ENCODE measurements at regions of chr10 and their contacts with region 1.

Region 1: DNA sequence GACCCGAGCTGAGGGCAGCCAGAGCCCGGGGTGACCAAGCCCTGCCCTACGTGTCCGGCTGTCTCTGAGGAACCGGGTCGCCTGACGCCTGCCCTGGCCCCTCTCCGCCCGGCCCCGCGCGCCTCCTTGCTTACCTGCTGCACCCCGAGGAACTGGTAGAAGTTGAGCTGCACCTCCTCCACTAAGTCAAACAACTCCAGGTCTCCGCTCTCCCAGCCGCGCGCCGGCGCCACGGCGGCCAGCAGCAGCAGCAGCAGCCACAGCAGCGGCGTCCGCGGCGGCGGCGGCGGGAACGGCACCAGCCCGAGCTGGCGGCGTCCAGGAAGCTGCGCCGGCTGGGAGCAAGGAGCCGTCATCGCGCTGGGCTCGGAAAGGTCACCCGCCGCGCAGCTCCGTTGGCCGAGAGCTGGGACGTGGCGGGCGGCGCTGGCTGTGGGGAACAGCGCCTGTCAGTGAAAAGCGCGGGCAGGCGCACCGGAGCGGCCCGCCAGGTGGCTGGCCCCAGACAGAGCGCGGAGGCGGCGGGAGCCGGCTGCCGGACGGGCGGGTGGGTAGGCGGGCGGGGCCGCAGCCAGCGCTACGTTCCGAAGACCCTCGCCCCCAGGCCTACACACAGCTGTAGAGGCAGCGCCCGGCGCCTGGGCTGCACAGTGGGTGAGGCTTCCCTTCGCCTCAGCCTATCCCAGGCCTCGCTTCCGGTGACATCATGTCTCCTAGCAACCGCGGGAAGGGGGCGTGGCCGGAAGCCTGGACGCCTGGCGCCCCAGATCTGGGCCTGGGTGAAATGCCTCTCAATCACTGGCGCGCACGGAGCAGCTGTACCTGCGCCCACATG is at the start of gene DNAJC1:
- DNase-seq: peak; percentile 99
- H3K4me3 ChIP-seq: peak within 1 kb of the TSS; percentile 65 to 91 (median 80)
- H3K27ac ChIP-seq: peak within 1 kb of the TSS; percentile 93 to 99 (median 98)
- H3K4me1 ChIP-seq: peaks cover 0 to 21% (median 13%) of the 10 kb centered on the region in 4 donors
- H3K27me3 ChIP-seq: no peaks in the 10 kb centered on the region
- CTCF ChIP-seq: peak in 2 of 5 experiments; percentile 6 to 31
- EP300 ChIP-seq: no peak
- POLR2A ChIP-seq: peak; percentile 81
- total RNA-seq, gene DNAJC1: 18.5 to 71.7 (median 48.4) TPM

Region 2: DNA sequence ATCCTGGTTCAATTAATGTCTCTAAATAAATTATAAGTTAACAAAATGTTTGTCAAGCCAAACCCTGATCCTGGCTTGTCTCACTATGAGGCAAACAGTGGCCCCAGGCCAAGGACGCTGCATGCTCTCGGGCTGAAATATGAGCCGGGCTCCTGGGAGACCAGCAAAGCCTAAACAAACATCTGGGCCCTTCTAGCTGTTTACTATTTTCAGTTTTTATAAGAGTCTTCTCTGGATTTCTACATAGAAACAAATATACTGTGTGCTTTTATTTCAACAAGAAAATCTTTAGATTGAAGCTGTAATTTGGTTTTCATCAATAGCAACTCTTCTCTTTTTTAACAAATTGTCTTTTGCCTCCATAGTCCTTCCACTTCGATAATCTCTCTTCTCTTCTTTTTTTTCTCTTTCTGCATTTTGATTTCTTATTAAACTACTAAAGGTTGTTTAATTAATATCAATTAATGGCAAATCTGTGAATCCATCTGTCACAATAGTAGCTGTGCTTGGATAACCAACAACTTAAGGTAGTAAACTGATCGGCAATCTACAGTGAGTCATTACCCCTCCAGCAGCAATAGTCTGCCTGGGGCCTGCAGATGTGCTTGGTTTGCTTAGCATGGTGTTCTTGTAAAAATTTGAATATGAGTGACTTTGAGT is 83.6 kb after region 1 on chr10:
- in situ Hi-C with region 1: no loop called
- intact Hi-C with region 1: no loop called
- DNase-seq: peak; percentile 66
- H3K4me3 ChIP-seq: no peak overlapping the region
- H3K27ac ChIP-seq: peak overlapping the region; percentile 22 to 51 (median 28)
- H3K4me1 ChIP-seq: peaks cover 0 to 10% (median 3%) of the 10 kb centered on the region in 4 donors
- H3K27me3 ChIP-seq: no peaks in the 10 kb centered on the region
- CTCF ChIP-seq: no peak
- EP300 ChIP-seq: no peak
- POLR2A ChIP-seq: no peak

Region 3: GRCh38 chr10:22251751-22252223 is 248.5 kb after region 1 on chr10:
- in situ Hi-C with region 1: no loop called
- intact Hi-C with region 1: loop called (anchors 10 kb)
- DNase-seq: peak; percentile 55
- H3K4me3 ChIP-seq: peak overlapping the region; percentile 28 to 92 (median 60)
- H3K27ac ChIP-seq: peak overlapping the region; percentile 83 to 96 (median 90)
- H3K4me1 ChIP-seq: peaks cover 0 to 26% (median 4%) of the 10 kb centered on the region in 4 donors
- H3K27me3 ChIP-seq: peaks cover 49% of the 10 kb centered on the region
- CTCF ChIP-seq: no peak
- EP300 ChIP-seq: no peak
- POLR2A ChIP-seq: peak; percentile 46

Region 4: DNA sequence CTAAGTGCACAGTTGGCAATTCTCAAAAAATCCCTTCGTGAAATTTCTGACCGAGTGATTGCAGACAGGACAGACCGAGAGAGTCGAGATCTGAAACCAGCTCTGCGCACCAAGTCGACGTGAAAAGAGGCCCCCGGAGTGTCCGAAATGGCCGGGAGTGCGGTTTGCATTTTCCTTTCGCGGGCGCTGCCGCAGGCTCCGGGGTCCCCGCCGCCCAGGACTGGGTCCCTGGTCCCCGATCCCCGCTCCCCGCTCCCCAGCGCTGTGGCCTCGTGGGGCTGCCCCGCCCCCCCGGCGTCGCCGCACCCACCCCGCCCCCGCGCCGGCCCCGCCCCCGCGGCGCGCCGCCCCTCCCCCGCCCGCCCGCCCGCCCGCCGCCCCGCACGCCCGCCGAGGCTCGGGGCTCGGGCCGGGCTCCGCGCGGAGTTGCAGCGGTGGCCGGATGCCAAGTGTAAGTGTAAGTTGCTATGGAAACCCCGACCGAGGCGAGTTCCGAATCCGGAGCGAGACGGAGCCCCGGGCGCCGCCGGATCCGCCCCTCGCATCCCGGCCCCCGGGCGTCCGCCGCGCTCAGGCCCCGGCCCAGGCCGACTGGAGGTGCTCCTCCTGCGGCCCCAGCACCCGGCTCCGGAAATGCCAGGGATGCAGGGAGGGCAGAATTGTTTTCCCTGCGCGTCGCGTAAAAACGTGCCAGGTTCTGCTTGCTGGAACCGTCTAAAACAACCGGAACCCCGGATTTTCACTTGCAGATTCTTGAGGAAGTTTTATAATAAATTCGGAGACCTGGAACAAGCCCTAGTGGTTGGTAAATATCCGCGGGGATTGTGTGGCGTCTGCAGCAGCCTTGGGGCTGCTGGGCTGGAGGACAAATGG is 322.2 kb after region 1 on chr10:
- in situ Hi-C with region 1: loop called in 2 of 4 experiments (anchors 10 to 25 kb)
- intact Hi-C with region 1: loop called (anchors 5 kb)
- DNase-seq: peak; percentile 79
- H3K4me3 ChIP-seq: peak overlapping the region; percentile 44 to 83 (median 54)
- H3K27ac ChIP-seq: peak overlapping the region; percentile 76 to 84 (median 81)
- H3K4me1 ChIP-seq: peaks cover 11 to 41% (median 22%) of the 10 kb centered on the region in 4 donors
- H3K27me3 ChIP-seq: peaks cover 31% of the 10 kb centered on the region
- CTCF ChIP-seq: no peak
- EP300 ChIP-seq: no peak
- POLR2A ChIP-seq: peak; percentile 12

Region 5: GRCh38 chr10:22550732-22551131 is 547.4 kb after region 1 on chr10:
- in situ Hi-C with region 1: loop called in 3 of 4 experiments (anchors 25 kb)
- intact Hi-C with region 1: no loop called
- DNase-seq: peak; percentile 44
- H3K4me3 ChIP-seq: no peak overlapping the region
- H3K27ac ChIP-seq: no peak overlapping the region
- H3K4me1 ChIP-seq: no peaks in the 10 kb centered on the region
- H3K27me3 ChIP-seq: no peaks in the 10 kb centered on the region
- CTCF ChIP-seq: peak; percentile 39 to 55 (median 52)
- EP300 ChIP-seq: no peak
- POLR2A ChIP-seq: no peak

Region 6: GRCh38 chr10:23067939-23068775 is 1064.9 kb after region 1 on chr10:
- in situ Hi-C with region 1: no loop called
- intact Hi-C with region 1: loop called (anchors 10 kb)
- DNase-seq: peak; percentile 85
- H3K4me3 ChIP-seq: no peak overlapping the region
- H3K27ac ChIP-seq: no peak overlapping the region
- H3K4me1 ChIP-seq: peaks cover 4 to 18% (median 15%) of the 10 kb centered on the region in 4 donors
- H3K27me3 ChIP-seq: no peaks in the 10 kb centered on the region
- CTCF ChIP-seq: peak; percentile 60 to 87 (median 83)
- EP300 ChIP-seq: no peak
- POLR2A ChIP-seq: no peak

Measured in transverse colon (tissue), 4 donors.